ENCODE measurements at regions of chr4 and their contacts with region 1.

Region 1: DNA sequence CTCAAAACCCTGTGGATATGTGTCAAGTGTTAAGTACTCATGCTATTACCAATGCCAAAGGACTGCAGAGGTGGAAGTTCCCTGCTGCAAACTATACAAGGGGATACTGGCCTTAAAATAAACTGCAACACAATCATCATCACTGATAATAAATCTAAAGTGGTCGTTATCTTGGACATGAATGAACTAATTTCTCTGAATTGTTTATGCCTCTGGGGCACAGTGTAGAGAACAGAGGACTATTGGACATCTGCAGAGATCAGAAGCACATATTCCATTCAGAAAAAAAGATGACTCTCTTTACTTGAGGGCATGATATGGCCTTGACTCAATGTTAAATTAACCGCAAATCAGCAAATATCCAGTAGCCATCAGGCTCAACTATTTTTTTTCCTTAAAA is 542.6 kb upstream of the IGFBP7 start:
- DNase-seq: no peak
- H3K4me3 ChIP-seq: no peak overlapping the region
- CTCF ChIP-seq: no peak
- POLR2A ChIP-seq: no peak

Region 2: DNA sequence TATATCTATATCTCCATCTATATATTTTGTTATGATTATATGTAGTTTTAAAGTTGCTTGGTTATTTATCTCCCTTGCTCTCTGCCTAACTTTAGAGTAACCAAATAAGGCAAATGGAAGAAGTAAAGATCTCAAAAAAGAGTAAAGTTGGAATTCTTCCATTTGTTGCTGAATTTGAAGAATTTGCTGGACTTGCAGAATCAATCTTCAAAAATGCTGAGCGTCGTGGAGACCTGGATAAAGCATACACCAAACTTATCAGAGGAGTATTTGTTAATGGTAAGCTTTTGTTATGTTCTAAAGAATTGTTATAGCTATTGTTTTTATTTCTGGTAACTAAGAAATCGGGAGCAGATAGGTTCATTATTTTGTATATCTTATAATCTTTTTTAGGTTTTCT is 1756.2 kb before region 1 on chr4:
- intact Hi-C with region 1: loop called (anchors 10 kb)
- DNase-seq: no peak
- H3K4me3 ChIP-seq: no peak overlapping the region
- CTCF ChIP-seq: no peak
- POLR2A ChIP-seq: no peak

Region 3: GRCh38 chr4:57763070-57763612 is 110.4 kb after region 1 on chr4:
- intact Hi-C with region 1: no loop called
- DNase-seq: no peak
- H3K4me3 ChIP-seq: no peak overlapping the region
- CTCF ChIP-seq: no peak
- POLR2A ChIP-seq: no peak

Region 4: DNA sequence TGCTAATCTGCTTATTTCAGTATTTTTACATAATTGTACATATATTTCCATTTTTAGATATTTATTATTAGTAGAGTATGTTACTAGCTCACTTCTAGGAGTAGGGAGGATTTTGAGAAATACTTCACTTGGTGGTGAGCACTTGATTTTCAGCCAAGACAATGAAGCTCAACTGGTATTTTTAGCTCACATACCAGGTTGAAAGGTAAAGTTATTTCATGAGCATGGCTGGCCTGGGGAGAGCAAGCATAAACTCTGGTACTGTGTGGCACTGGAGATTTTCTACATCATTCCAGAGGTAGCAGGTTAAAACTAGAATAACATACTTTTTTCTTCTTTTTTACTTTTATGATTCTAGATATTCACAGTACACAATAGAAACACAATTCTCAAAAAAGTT is 324.1 kb after region 1 on chr4:
- intact Hi-C with region 1: no loop called
- DNase-seq: no peak
- H3K4me3 ChIP-seq: no peak overlapping the region
- CTCF ChIP-seq: no peak
- POLR2A ChIP-seq: no peak

Measured in lower leg skin (tissue), 4 donors.